T-cell (primary cell): ENCODE measurements at regions of chr20 and their contacts with region 1.

Region 1: DNA sequence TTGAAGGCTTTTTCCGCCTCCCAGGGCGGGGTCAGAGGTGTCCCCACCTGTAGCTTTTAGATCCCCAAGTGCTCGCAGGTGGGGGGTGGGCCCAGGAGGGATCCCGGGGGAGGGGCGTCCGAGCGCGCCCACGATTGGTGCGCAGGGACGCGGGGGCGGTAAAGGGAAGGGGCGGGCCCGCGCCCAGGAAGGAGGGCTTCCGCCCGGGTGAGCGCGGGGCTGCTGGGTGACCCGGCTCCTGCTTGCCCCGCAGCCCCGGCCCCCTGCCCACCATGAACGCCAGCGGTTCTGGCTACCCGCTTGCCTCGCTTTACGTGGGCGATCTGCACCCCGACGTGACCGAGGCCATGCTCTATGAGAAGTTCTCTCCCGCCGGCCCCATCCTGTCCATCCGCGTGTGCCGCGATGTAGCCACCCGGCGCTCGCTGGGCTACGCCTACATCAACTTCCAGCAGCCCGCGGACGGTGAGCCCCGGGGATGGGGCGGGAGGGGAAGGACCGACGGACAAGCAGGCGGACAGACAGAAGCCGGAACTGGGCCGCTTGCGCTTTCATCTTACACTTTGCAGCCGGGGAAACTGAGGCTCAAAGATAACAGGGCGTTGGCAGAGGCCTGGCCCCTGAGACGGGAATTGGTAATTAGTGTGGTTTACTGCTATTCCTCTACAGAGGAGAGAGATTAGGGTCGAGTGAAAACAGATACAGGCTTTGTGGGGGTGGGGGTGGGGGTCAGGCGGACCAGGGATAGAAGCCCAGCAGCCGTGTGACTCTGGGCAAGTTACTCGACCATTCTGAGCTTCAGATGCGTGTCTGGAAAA is at the start of gene PABPC1L:
- DNase-seq: peak; percentile 56 to 84 (median 71)
- ATAC-seq: peak; percentile 96 to 98 (median 98)
- H3K4me3 ChIP-seq: peak within 1 kb of the TSS; percentile 69 to 81
- H3K4me3 Mint-ChIP-seq: peak within 1 kb of the TSS; percentile 77 to 87 (median 82)
- H3K27ac ChIP-seq: no peak within 1 kb of the TSS
- H3K27ac Mint-ChIP-seq: peak within 1 kb of the TSS; percentile 55 to 68
- H3K4me1 ChIP-seq: peaks cover 14 to 29% of the 10 kb centered on the region in 2 experiments
- H3K4me1 Mint-ChIP-seq: peaks cover 27 to 34% (median 33%) of the 10 kb centered on the region in 3 donors
- H3K27me3 ChIP-seq: no peaks in the 10 kb centered on the region
- H3K27me3 Mint-ChIP-seq: no peaks in the 10 kb centered on the region
- total RNA-seq, gene PABPC1L: 45.6 to 66.2 (median 58.2) TPM

Region 2: DNA sequence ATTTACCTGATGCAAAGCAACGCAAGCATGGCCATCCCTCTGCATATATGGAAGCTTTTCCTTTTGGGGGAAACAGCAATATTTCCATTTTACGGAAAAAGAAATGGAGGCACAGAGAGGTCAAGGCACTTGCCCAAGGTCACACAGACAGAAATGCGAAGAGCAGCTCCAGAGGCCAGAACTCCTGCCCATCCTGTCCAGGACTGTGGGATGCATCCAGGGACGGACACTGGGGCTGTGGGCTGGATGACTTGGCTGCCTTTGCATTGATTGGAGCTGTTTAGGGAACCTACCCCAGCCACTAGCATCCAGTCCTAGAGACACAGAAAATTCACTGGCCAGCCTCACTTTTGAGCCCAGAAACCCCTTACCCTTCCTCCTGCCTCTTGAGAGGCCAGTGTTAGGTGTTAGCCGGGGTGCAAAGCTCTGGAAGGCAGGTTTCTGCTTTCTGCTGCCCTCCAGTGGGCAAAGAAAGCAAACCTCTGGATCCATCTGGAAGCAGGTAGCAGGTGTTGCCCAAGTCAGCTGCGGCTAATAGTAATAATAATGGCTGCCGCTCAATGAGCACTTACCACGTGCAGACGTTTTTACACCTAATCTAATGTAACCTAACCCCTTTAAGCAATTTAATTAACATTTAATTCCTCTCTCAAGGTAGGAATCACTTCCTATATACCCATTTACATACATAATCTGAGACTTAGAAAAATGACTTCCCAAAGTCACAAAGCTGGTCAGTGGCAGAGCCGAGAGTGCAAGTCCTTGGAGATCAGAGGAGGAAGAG is 226.6 kb before region 1 on chr20:
- CTCF ChIA-PET with region 1: no interaction called
- POLR2A ChIA-PET with region 1: interaction called in 1 of 2 experiments, 13 read pairs
- DNase-seq: peak in 31 of 35 experiments; percentile 5 to 71 (median 46)
- ATAC-seq: peak; percentile 69 to 92 (median 88)
- H3K4me3 ChIP-seq: no peak overlapping the region
- H3K4me3 Mint-ChIP-seq: no peak overlapping the region
- H3K27ac ChIP-seq: no peak overlapping the region
- H3K27ac Mint-ChIP-seq: no peak overlapping the region
- H3K4me1 ChIP-seq: peaks cover 0 to 11% of the 10 kb centered on the region in 2 experiments
- H3K4me1 Mint-ChIP-seq: peaks cover 7 to 17% (median 11%) of the 10 kb centered on the region in 3 donors
- H3K27me3 ChIP-seq: peaks cover 0 to 9% of the 10 kb centered on the region in 2 experiments
- H3K27me3 Mint-ChIP-seq: peaks cover 4 to 7% of the 10 kb centered on the region in 2 donors

Region 3: GRCh38 chr20:44888226-44889103 is 21.6 kb before region 1 on chr20:
- CTCF ChIA-PET with region 1: interaction called, 3 to 10 read pairs
- POLR2A ChIA-PET with region 1: interaction called in 1 of 2 experiments, 9 read pairs
- DNase-seq: peak in 1 of 35 experiments; percentile 41
- ATAC-seq: no peak
- H3K4me3 ChIP-seq: peak overlapping the region in 1 of 2 donors; percentile 15
- H3K4me3 Mint-ChIP-seq: peak overlapping the region; percentile 93 to 97 (median 96)
- H3K27ac ChIP-seq: peak overlapping the region; percentile 49
- H3K27ac Mint-ChIP-seq: peak overlapping the region; percentile 83 to 88
- H3K4me1 ChIP-seq: peaks cover 25 to 61% of the 10 kb centered on the region in 2 experiments
- H3K4me1 Mint-ChIP-seq: peaks cover 77 to 85% (median 83%) of the 10 kb centered on the region in 3 donors
- H3K27me3 ChIP-seq: no peaks in the 10 kb centered on the region
- H3K27me3 Mint-ChIP-seq: no peaks in the 10 kb centered on the region

Region 4: GRCh38 chr20:46375771-46376170 is 1465.7 kb after region 1 on chr20:
- CTCF ChIA-PET with region 1: no interaction called
- POLR2A ChIA-PET with region 1: no interaction called
- DNase-seq: no peak
- ATAC-seq: no peak
- H3K4me3 ChIP-seq: no peak overlapping the region
- H3K4me3 Mint-ChIP-seq: no peak overlapping the region
- H3K27ac ChIP-seq: no peak overlapping the region
- H3K27ac Mint-ChIP-seq: no peak overlapping the region
- H3K4me1 ChIP-seq: no peaks in the 10 kb centered on the region
- H3K4me1 Mint-ChIP-seq: peaks cover 0 to 6% (median 0%) of the 10 kb centered on the region in 3 donors
- H3K27me3 ChIP-seq: no peaks in the 10 kb centered on the region
- H3K27me3 Mint-ChIP-seq: no peaks in the 10 kb centered on the region